ENCODE measurements at regions of chr20 and their contacts with region 1.

Region 1: DNA sequence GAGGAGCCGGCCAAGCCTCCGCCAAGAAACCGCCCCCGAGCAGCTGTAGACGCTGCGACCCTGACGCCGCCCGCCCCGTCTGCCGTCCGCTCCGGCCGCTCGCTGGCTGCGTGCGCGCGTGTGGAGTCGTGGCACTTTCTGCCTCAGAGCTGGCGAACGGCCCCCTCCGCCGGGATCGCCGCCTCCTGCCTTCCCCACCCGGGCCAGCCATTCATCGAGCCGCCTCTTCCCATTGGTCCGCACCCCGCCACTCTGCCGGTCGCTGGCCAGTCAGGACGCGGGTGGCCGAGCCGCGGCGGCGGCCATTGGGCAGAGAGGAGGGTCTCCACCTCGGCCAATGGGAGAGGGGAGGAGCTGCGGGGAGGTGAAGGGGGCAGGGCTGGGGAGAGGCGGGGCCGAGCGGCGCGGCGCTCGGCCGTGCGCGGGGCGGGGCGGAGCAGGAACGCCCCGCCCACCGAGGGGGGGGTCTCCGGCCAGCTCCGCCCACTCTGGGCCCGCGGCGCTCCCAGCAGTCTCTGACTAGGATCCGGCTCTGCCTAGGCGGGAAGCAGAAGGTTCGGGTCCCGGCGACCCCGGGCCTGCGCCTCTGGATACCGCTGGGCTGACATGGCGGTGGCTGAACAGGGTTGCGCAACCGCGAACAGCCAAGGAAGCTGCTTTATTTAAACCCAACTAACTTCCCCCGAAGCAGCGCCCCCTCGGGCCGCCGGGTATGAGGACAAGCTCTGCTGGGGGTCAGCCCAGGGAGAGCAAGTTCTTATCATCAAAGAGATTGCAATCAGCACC is at the start of gene RRBP1:
- DNase-seq: peak; percentile 96 to 99 (median 99)
- ATAC-seq: peak; percentile 87
- H3K4me3 ChIP-seq: peak within 1 kb of the TSS; percentile 86
- H3K4me1 ChIP-seq: peaks cover 30% of the 10 kb centered on the region
- CTCF ChIP-seq: peak; percentile 52
- total RNA-seq, gene RRBP1: 210 to 402 (median 377) TPM

Region 2: DNA sequence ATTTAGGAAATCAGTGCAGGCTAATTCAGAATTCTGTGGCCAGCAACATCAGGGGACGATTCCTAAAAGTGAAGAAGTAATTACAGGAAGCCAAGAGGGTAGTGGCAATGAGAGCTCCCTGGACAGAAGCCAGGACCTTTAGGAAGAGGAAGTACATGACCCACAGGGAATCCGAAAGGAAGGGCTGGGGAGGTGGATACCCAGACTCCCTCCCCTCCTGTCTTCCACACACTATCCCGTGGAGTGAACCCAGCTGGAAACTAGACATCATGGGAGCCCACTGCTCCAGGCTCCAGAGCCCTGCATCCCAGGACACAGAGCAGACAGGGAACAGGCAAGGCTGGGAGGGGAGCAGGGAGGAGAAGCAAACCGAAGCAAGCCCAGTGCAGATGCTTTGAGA is 203.2 kb after region 1 on chr20:
- intact Hi-C with region 1: loop called (anchors 5 to 10 kb)
- DNase-seq: peak in 1 of 3 donors; percentile 69
- ATAC-seq: peak; percentile 32
- H3K4me3 ChIP-seq: no peak overlapping the region
- H3K4me1 ChIP-seq: peaks cover 10% of the 10 kb centered on the region
- CTCF ChIP-seq: no peak

Region 3: DNA sequence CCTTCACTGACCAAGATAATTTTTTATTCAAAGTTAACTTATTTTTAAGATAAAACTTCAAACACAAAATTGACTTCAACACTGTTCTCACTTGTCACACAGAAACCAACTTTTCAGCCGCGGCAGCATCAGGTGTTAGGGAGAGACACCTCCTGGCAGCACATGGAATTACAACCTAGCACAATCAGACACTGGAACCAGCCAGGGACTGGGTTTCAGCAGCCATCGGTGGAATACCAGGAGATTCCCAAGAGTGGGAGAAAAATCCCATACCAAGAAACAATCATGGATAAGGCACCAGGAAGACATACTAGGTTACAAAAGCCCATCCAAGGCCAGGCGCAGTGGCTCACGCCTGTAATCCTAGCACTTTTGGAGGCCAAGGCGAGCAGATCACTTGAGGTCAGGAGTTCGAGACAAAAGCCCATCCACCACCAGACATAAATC is 216.3 kb after region 1 on chr20:
- intact Hi-C with region 1: loop called in 1 of 2 experiments (anchors 10 kb)
- DNase-seq: peak in 2 of 3 donors; percentile 68 to 90
- ATAC-seq: peak; percentile 87
- H3K4me3 ChIP-seq: no peak overlapping the region
- H3K4me1 ChIP-seq: peaks cover 3% of the 10 kb centered on the region
- CTCF ChIP-seq: peak; percentile 80